Naive thymus-derived CD4-positive, alpha-beta T cell (primary cell): ENCODE measurements at regions of chr5 and their contacts with region 1.

Region 1: DNA sequence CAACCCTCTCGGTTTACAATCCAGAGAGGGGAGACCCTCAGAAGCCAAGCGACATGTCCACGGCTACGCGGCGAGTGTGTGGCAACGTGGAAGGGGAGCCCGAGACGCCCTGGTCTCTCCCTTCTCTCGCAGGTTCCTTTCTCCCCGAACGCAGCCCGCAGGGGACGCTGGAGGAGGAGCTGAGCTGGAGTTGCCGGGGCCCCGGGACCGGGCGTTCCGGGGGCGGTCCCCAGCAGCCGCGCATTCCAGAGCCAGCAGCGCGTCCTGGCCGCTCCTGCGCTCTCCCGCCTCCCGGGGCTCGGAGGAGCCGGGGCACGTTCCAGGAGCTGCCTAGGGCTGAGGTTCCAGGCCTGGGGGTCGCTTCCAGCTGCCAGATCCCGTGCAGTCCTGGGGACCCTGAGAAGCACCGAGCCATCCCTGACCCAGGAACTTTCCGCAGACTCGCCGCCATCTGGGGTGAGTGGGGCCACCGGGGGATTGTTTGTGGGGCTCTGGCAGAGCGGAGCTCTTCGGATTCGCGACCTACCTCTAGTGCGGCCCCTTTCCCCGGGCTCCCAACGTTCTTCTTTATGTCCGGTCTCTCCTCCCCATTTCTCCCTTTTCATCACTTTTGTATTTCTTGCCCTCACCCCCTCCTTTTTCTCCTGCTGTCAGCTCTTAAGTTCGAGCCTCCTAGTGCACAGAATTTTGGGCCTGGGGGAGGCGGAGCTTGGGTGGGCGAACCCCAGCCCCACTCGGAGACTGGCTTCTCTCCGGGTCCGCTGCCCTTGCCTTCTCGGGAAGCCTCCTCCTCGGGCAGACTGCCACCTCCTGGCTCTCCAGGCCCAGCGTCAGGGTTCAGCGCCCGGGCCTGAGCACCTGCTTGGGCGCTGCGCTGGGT is at the start of gene SMIM3:
- DNase-seq: peak; percentile 45 to 71 (median 62)
- ATAC-seq: peak; percentile 77
- H3K4me3 ChIP-seq: peak within 1 kb of the TSS; percentile 80
- H3K4me3 Mint-ChIP-seq: peak within 1 kb of the TSS; percentile 95 to 100 (median 98)
- H3K27ac ChIP-seq: peak within 1 kb of the TSS; percentile 73
- H3K27ac Mint-ChIP-seq: peak within 1 kb of the TSS; percentile 91 to 98 (median 95)
- H3K4me1 ChIP-seq: peaks cover 17 to 41% of the 10 kb centered on the region in 2 donors
- H3K4me1 Mint-ChIP-seq: peaks cover 34 to 62% (median 57%) of the 10 kb centered on the region in 7 donors
- H3K27me3 ChIP-seq: no peaks in the 10 kb centered on the region
- H3K27me3 Mint-ChIP-seq: peaks cover 0 to 5% (median 0%) of the 10 kb centered on the region in 5 donors
- total RNA-seq, gene SMIM3: 5.2 to 17.9 (median 7.9) TPM

Region 2: DNA sequence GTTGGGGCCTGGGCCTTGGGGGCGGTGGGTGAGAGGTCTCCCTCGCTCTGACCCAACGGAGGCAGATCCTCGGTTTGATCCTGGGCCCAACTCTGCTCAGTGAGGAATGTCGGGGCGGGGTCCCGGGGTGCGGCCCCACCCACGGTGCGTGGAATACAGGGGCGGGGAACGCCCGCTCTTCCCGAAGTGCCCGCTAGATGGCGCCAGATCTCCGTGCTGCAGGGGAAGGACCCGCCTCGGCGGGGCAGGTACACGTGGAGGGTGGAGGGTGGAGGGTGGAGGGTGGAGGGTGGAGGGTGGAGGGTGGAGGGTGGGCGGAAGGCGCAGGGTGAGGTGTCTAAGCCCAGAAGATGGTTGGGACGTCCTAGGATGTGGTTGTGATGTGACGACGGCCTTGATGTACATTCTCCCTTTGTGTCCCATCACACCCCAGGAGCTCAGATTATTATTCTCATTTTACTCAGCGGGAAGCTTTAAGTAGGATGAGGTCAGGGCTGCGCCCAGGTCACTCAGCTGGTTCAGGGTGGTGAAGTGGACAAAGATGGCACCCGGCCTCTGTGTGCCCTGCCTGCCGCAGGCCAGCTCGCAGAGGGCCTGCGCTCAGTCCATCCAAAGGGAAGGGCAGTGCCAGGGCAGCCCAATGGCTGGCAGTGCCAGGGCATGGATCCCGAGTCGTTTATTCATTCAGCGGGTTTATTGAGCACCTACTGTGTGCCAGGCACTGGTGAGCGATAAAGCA is 319.8 kb before region 1 on chr5:
- CTCF ChIA-PET with region 1: interaction called, 3 read pairs
- POLR2A ChIA-PET with region 1: no interaction called
- intact Hi-C with region 1: loop called in 1 of 2 experiments (anchors 1 kb)
- DNase-seq: peak; percentile 72 to 92 (median 85)
- ATAC-seq: peak; percentile 99
- H3K4me3 ChIP-seq: no peak overlapping the region
- H3K4me3 Mint-ChIP-seq: peak overlapping the region in 9 of 10 donors; percentile 4 to 70 (median 60)
- H3K27ac ChIP-seq: peak overlapping the region; percentile 23
- H3K27ac Mint-ChIP-seq: peak overlapping the region; percentile 40 to 91 (median 77)
- H3K4me1 ChIP-seq: peaks cover 0 to 30% of the 10 kb centered on the region in 2 donors
- H3K4me1 Mint-ChIP-seq: peaks cover 17 to 50% (median 42%) of the 10 kb centered on the region in 7 donors
- H3K27me3 ChIP-seq: no peaks in the 10 kb centered on the region
- H3K27me3 Mint-ChIP-seq: no peaks in the 10 kb centered on the region

Region 3: DNA sequence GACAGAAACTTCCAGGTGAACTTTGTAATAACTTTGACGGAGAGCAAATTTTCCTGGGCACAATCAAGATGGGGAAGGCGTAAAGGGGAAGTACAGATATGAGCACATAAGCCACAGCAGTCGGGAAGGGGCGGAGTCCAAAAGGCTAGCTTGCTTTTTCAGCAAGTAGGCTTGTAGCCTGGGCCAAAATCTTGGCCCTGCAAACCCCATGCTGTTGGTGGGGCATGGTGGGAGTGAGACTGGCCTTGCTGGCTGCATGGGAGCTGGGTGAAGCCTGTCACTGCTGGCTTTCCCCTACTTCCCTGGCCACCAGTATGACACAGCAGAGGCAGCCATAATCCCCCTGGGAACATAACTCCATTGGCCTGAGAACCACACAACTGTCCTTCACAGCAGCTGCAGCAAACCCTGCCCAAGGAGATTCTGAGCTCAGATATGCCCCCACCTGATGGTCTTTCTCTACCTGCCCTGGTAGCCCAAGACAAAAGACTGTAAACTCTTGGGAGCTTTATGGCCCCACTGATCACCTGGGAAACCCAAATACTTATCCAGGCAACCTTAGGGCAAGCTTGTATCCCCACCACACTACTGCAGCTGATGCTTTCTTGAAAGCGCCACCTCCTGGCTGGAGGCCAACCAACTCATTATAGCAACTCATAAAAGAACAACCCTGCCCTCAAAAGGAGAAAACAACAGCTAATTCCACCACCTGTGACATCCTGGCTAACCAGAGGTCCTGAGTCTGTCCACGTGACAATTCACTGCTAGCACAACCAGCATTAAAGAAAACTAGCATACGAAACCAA is 44.0 kb before region 1 on chr5:
- CTCF ChIA-PET with region 1: interaction called, 3 read pairs
- POLR2A ChIA-PET with region 1: no interaction called
- intact Hi-C with region 1: loop called in 1 of 2 experiments (anchors 5 kb)
- DNase-seq: no peak
- ATAC-seq: peak; percentile 84
- H3K4me3 ChIP-seq: no peak overlapping the region
- H3K4me3 Mint-ChIP-seq: no peak overlapping the region
- H3K27ac ChIP-seq: no peak overlapping the region
- H3K27ac Mint-ChIP-seq: peak overlapping the region in 3 of 9 donors; percentile 59 to 74 (median 68)
- H3K4me1 ChIP-seq: peaks cover 0 to 16% of the 10 kb centered on the region in 2 donors
- H3K4me1 Mint-ChIP-seq: peaks cover 39 to 54% (median 48%) of the 10 kb centered on the region in 7 donors
- H3K27me3 ChIP-seq: no peaks in the 10 kb centered on the region
- H3K27me3 Mint-ChIP-seq: no peaks in the 10 kb centered on the region

Region 4: DNA sequence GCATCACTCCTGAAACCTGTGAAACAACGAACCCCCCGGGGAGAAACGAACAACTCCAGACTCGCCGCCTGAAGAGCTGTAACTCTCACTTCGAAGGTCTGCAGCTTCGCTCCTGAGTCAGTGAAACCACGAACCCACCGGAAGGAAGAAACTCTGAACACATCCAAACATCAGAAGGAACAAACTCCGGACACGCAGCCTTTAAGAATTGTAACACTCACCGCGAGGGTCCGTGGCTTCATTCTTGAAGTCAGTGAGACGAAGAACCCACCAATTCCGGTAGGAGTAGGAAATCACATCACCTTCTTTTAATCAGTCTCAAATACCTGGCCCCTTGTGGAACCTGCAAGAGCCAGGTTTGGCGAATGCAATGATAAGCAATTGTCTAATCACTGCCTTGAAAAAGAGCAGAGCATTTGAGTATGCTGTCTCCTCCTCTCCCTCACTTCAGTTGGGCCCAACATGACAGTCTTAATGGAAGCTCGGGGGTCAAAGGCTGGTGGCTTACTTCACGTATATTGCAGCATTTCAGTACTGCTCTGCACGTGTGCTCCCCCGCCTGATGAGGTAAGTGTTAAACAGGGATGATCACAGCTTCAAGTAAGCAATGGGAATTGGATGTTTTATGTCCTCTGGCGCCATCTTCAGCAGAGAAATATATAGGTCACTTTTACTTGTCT is 68.0 kb after region 1 on chr5:
- CTCF ChIA-PET with region 1: interaction called, 30 read pairs
- POLR2A ChIA-PET with region 1: interaction called, 7 read pairs
- intact Hi-C with region 1: loop called (anchors 1 kb)
- DNase-seq: peak; percentile 17 to 83 (median 77)
- ATAC-seq: peak; percentile 98
- H3K4me3 ChIP-seq: peak overlapping the region; percentile 38
- H3K4me3 Mint-ChIP-seq: peak overlapping the region; percentile 65 to 93 (median 88)
- H3K27ac ChIP-seq: peak overlapping the region; percentile 52
- H3K27ac Mint-ChIP-seq: peak overlapping the region; percentile 65 to 94 (median 88)
- H3K4me1 ChIP-seq: no peaks in the 10 kb centered on the region
- H3K4me1 Mint-ChIP-seq: peaks cover 6 to 30% (median 19%) of the 10 kb centered on the region in 7 donors
- H3K27me3 ChIP-seq: no peaks in the 10 kb centered on the region
- H3K27me3 Mint-ChIP-seq: peaks cover 0 to 5% (median 0%) of the 10 kb centered on the region in 5 donors

Region 5: DNA sequence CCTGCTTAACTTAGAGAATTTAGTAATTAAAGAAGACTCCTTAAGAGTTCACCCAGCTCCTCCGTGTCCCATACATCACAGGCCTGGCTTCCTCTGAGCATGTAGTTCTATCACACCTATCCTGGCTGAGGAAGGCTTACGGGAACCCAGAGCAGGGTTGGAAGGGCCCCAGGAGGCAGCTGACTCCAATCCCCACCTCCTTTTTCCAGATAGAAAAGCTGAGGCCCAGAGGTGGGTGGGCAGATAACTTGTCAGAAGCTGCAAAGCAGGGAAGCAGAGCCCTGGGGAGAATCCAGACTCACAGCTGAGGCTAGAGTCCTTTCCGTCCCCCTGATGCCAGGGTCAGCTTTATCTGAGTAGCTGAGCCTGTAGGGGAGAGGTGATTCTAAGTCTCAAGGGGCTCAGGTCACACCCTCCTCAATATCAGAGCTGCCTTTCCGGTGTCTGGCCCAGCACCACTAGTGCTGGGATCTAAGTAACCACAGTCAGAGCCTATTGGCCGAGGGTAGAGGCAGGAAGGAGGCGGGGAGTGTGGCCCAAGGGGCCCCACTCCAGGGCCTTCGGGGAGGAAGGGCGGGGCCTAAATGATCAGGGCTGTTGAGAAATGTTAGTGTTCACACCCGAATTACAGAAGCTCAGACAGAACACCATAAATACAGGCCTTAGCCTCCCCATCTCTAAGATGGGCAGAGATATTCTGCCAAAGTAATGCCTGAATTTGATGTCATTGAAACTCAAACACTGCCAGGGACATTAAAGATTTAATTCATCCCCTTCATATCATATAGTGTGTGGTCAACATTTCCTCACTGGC is 435.2 kb after region 1 on chr5:
- CTCF ChIA-PET with region 1: no interaction called
- POLR2A ChIA-PET with region 1: interaction called, 3 read pairs
- intact Hi-C with region 1: loop called in 1 of 2 experiments (anchors 5 kb)
- DNase-seq: peak; percentile 53 to 85 (median 79)
- ATAC-seq: peak; percentile 90
- H3K4me3 ChIP-seq: peak overlapping the region; percentile 74
- H3K4me3 Mint-ChIP-seq: peak overlapping the region; percentile 80 to 93 (median 89)
- H3K27ac ChIP-seq: peak overlapping the region; percentile 93
- H3K27ac Mint-ChIP-seq: peak overlapping the region; percentile 90 to 98 (median 97)
- H3K4me1 ChIP-seq: peaks cover 80 to 82% of the 10 kb centered on the region in 2 donors
- H3K4me1 Mint-ChIP-seq: peaks cover 56 to 95% (median 84%) of the 10 kb centered on the region in 7 donors
- H3K27me3 ChIP-seq: no peaks in the 10 kb centered on the region
- H3K27me3 Mint-ChIP-seq: no peaks in the 10 kb centered on the region

Region 6: DNA sequence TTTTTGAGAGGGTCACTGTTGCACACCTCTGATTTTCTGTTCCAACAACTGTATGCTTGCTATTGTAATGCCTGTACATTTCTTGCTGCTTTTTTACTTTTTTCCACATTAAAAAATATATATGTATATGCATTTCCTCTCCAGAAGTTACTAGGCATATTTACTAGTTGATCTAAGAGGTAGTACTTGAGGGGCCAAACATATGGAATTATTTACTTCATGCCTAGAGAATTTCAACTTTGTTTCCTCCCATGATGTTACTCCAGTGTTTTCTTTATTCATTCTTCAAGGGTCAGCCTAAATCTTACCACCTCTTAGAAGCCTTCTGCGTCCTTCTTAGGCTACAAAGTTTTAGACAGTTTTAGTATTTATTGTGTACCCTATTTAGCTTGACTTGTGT is 1503.6 kb after region 1 on chr5:
- CTCF ChIA-PET with region 1: no interaction called
- POLR2A ChIA-PET with region 1: no interaction called
- intact Hi-C with region 1: no loop called
- DNase-seq: no peak
- ATAC-seq: no peak
- H3K4me3 ChIP-seq: no peak overlapping the region
- H3K4me3 Mint-ChIP-seq: no peak overlapping the region
- H3K27ac ChIP-seq: no peak overlapping the region
- H3K27ac Mint-ChIP-seq: no peak overlapping the region
- H3K4me1 ChIP-seq: no peaks in the 10 kb centered on the region
- H3K4me1 Mint-ChIP-seq: no peaks in the 10 kb centered on the region
- H3K27me3 ChIP-seq: no peaks in the 10 kb centered on the region
- H3K27me3 Mint-ChIP-seq: peaks cover 0 to 42% (median 16%) of the 10 kb centered on the region in 5 donors